IMR-90 (cell line): ENCODE measurements at regions of chr4 and their contacts with region 1.

Region 1: DNA sequence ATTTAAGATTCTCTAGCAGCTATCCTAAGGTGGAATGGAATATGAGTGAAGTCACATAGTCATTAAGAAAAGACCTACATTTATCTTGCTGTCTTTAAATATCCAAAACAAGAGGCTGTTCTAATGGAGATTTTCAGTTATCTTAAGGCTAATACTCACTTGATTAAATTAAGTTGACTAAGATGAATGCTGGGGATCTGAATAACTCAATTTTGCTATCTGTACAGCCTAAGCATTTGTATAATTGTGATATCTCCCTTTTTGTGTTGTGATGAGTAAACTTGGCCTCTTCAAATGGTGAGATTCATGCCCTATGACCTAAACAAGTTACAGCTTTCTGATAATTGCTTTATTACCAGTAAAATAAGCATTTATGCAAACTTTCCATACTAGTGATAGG is 13.6 kb upstream of the GUCY1A1 start:
- DNase-seq: no peak
- ATAC-seq: no peak
- H3K4me3 ChIP-seq: no peak overlapping the region
- H3K27ac ChIP-seq: no peak overlapping the region
- H3K4me1 ChIP-seq: no peaks in the 10 kb centered on the region
- H3K27me3 ChIP-seq: no peaks in the 10 kb centered on the region
- CTCF ChIP-seq: no peak
- POLR2A ChIP-seq: no peak
- RAD21 ChIP-seq: no peak

Region 2: GRCh38 chr4:155679343-155679742 is 26.3 kb after region 1 on chr4:
- CTCF ChIA-PET with region 1: no interaction called
- POLR2A ChIA-PET with region 1: no interaction called
- dilution Hi-C with region 1: no loop called
- in situ Hi-C with region 1: no loop called
- intact Hi-C with region 1: loop called (anchors 1 kb)
- DNase-seq: peak; percentile 38
- ATAC-seq: no peak
- H3K4me3 ChIP-seq: no peak overlapping the region
- H3K27ac ChIP-seq: no peak overlapping the region
- H3K4me1 ChIP-seq: peaks cover 4% of the 10 kb centered on the region; the same call in 1 of the 2 replicates
- H3K27me3 ChIP-seq: no peaks in the 10 kb centered on the region; the same call in 1 of the 2 replicates
- CTCF ChIP-seq: no peak
- POLR2A ChIP-seq: no peak
- RAD21 ChIP-seq: no peak